ENCODE measurements at regions of chr17 and their contacts with region 1.

Region 1: GRCh38 chr17:57130761-57131461 is 45.9 kb downstream of the AKAP1 start:
- DNase-seq: peak; percentile 76 to 94 (median 83)
- H3K4me3 ChIP-seq: peak overlapping the region in 20 of 59 donors; percentile 4 to 53 (median 32)
- H3K27ac ChIP-seq: no peak overlapping the region
- H3K27me3 ChIP-seq: no peaks in the 10 kb centered on the region
- CTCF ChIP-seq: peak; percentile 77 to 98 (median 92)

Region 2: GRCh38 chr17:57234751-57235117 is 103.8 kb after region 1 on chr17:
- intact Hi-C with region 1: no loop called
- DNase-seq: no peak
- H3K4me3 ChIP-seq: no peak overlapping the region
- H3K27ac ChIP-seq: no peak overlapping the region
- H3K27me3 ChIP-seq: peaks cover 0 to 19% (median 0%) of the 10 kb centered on the region in 45 donors
- CTCF ChIP-seq: no peak

Region 3: DNA sequence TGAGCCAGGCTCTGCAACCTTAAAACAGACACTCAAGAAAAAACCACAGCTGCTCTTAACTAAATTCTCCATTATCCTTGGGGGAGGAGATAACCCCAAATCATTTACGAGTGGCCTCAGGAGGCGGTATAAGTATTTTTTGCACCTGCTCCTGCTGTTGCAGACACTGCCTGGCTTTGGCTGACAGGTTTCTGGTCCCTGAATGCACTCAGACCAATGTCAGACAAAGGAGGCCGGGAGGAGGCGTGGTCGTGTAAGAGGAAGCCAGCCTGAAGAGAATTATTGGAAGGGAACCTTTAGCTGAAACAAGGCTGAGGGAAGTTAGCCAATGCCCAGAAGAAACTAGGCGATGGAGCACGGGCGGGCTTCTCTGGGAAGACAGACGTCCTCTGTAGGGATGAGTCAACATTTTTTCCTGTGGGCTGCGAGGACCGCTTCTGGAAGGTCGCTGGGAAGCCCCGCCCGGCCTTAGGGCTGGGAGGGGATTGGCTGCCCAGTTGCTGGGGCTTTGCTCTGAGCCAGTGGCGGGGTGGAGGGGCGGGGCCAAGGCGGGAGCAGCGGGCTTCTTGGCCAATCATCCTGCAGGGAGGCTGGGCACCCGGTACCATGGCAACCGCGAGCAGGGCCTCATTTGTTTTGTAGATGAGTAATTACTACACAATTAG is 531.9 kb after region 1 on chr17:
- intact Hi-C with region 1: loop called in 1 of 2 experiments (anchors 10 kb)
- DNase-seq: peak; percentile 98 to 100 (median 99)
- H3K4me3 ChIP-seq: peak overlapping the region in 58 of 59 donors; percentile 9 to 69 (median 52)
- H3K27ac ChIP-seq: peak overlapping the region; percentile 71 to 99 (median 94)
- H3K27me3 ChIP-seq: no peaks in the 10 kb centered on the region
- CTCF ChIP-seq: peak in 27 of 56 donors; percentile 6 to 47 (median 28)

Region 4: DNA sequence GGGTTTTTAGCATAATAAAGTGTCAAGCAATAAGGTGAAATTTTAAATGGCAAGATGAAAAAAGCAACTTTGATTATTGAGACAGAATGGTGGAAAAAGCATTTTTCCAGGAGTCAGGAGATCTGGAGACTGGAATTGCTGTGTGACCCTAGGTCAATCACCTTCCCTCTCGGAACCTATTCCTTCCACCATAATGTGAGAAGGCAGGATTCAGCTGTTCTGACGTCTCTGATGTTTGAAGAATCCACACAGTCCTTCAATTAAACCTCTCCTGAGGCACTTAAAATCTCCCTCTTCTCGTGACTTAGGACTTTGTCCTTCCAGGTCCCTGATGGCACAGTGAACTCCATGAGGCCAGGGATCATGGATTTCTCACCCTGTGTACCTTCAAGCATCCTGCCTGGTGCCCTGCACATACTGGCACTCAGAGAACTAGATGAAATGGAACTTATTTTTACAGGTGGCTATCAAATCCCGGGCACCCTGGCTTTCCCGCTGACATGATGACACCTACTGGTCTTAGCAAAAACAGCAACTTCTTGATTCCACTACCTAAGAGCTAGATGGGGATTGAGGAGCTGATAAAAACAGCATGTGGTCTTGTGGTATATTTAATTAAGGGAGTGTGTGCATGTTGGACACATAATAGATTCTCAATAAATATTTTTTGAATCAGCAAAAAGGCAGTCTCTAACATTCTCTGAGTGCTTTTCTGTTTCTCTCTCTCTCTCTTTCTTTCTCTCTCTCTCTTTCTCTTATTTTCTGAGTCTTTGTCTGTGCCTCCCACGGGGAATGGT is 616.5 kb after region 1 on chr17:
- intact Hi-C with region 1: loop called (anchors 2 to 5 kb)
- DNase-seq: peak in 6 of 10 donors; percentile 11 to 59 (median 52)
- H3K4me3 ChIP-seq: no peak overlapping the region
- H3K27ac ChIP-seq: no peak overlapping the region
- H3K27me3 ChIP-seq: no peaks in the 10 kb centered on the region
- CTCF ChIP-seq: peak; percentile 43 to 90 (median 75)

Region 5: GRCh38 chr17:57833179-57833939 is 702.4 kb after region 1 on chr17:
- intact Hi-C with region 1: loop called (anchors 2 to 5 kb)
- DNase-seq: peak in 9 of 10 donors; percentile 36 to 74 (median 62)
- H3K4me3 ChIP-seq: peak overlapping the region in 58 of 59 donors; percentile 14 to 67 (median 49)
- H3K27ac ChIP-seq: peak overlapping the region in 52 of 59 donors; percentile 1 to 87 (median 68)
- H3K27me3 ChIP-seq: no peaks in the 10 kb centered on the region
- CTCF ChIP-seq: peak; percentile 75 to 97 (median 90)